AG04449 (cell line): ENCODE measurements at regions of chr15 and their contacts with region 1.

Region 1: DNA sequence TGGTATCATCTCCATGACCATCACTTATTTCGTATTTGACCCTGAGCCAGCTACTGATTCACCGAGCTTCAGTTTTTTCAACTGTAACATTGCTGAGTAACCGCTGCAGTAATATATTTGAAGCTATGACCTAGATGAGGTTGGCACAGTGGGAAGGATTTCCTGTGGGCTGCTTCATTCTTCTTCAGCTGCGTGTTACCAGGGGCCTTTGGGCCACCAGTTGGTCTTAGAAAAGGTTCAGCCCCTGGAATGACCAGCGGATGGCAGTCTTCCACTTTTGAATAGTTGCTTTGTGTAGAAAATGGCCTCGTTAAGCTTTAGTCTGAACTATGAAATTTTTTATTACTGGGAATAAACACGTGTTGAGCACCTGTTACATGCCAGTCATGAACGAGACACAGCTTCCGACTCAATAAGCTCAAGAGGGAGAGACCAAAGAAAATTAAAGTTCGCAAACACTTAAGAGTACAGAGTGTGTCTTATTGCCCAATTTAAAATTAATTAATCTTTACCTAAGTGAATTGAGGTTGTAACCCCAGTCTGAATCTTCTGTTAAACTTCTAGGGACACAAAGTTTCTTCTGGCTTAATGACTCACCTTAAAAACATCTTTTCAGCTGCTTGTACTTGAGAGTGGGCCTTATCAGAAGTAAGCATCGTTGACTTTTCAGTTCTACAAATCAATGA is 57.6 kb upstream of the NR2E3 start:
- DNase-seq: peak; percentile 92
- H3K4me3 ChIP-seq: no peak overlapping the region
- CTCF ChIP-seq: peak; percentile 62

Region 2: DNA sequence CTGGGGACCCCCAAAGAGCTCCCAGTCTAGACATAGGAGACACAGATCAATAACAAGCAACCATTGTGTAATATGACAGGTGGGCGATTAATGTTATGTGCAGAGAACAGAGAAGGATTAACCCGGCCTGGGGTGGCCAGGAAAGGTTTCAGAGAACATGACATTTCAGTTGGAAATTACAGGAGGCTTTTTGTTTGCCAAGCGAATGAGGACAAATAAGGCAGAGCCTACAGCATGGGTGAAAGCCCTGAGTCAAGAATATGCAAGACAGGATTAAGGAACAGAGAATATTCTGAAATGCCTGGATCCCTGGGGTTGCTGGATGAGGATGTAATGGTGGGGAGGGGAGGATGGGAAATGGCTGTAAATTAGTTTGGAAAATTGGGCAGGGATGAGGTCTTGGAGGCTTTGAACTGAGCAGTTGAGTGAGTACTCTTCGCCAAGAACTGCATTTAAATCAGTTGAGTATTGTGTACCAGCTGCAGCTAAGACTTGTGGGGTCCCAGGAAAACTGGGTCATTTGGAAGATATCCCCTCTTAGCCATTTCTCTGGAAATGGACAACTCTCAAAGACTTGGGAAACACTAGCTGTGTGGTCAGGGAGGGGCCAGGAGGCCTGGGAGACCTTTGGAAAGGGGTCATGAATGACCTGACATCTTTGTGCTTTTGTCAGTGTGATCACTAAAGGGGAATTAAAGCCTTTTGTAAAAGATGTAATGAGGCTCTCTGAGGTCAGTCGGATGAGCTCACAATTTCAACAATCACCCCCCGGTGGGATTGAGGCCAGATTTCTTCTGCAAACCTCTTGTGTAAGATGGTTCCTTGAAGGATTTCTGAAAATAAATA is 141.0 kb before region 1 on chr15:
- CTCF ChIA-PET with region 1: no interaction called
- POLR2A ChIA-PET with region 1: no interaction called
- DNase-seq: no peak
- H3K4me3 ChIP-seq: no peak overlapping the region
- CTCF ChIP-seq: no peak

Region 3: GRCh38 chr15:71730277-71731144 is 22.2 kb before region 1 on chr15:
- CTCF ChIA-PET with region 1: interaction called, 10 read pairs
- POLR2A ChIA-PET with region 1: no interaction called
- DNase-seq: no peak
- H3K4me3 ChIP-seq: no peak overlapping the region
- CTCF ChIP-seq: peak; percentile 83

Region 4: GRCh38 chr15:71780115-71780976 is 27.6 kb after region 1 on chr15:
- CTCF ChIA-PET with region 1: interaction called, 59 read pairs
- POLR2A ChIA-PET with region 1: no interaction called
- DNase-seq: no peak
- H3K4me3 ChIP-seq: no peak overlapping the region
- CTCF ChIP-seq: peak; percentile 61

Region 5: DNA sequence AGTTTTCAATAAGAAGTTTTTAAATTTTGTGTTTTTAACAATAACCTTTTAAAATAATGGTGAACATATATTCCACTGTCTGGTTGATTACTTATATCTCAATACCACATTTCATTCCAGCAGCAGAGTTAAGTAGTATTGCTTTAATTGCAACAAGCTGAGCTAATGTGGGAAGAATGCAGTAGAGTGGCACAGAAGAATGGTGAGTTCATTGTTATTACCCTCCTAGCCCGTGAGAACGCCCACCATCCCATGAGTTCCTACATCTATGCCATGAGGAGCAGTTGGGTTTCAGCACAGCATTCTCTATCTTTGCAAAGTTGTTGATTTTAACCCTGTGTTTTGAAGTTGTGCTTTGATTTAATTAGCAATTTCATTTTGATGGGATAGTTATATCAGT is 39.8 kb after region 1 on chr15:
- CTCF ChIA-PET with region 1: interaction called, 171 read pairs
- POLR2A ChIA-PET with region 1: no interaction called
- DNase-seq: peak; percentile 52
- H3K4me3 ChIP-seq: no peak overlapping the region
- CTCF ChIP-seq: no peak

Region 6: GRCh38 chr15:71806452-71806931 is 53.7 kb after region 1 on chr15:
- CTCF ChIA-PET with region 1: interaction called, 171 read pairs
- POLR2A ChIA-PET with region 1: no interaction called
- DNase-seq: no peak
- H3K4me3 ChIP-seq: no peak overlapping the region
- CTCF ChIP-seq: no peak

Region 7: DNA sequence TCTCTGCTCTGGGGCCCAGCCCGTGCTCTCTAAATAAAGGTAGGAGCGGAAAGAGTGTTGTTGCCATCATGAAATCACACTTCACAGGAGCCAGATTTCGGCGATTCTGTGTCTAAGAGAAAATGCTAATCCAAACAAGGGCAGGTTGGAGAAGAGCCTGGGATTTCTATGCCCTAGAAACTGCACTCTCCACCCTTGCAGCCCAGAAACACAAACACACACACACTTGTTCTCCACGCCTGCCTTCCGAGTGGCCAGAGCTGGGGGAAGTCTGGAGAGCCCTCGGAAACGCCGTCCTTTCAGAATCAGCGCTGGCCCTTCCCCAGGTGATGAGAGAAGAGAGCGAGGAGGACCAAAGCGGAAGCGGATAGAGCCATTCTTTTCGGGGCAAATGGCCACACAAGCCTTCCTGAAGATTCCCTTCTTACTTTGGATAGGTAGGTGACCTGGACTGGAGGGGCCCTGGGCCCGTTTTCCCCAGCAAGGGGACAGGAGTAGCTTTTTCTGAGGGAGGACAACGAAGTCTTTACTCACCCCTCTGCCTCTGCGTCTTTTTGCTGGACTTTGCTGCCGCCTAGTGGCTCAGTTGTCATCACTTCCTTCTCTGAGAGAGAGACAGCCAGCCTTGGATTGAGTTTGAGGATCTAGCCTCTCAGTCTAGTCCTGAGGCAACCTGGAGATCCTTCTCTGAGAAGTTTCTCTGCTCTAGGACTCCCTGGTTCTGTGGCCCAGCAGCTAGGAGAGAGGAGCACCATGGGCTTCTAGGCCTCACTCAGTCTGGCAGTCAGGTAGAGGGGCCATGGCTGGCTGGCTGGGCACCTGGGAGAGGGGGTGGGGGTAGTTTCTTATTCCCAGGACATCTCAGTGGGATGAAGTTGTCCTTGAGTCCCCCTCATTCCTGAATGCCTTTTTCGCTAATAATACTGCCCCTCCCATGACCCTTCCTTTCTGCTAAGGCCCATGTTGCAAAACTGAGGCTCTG is 403.2 kb after region 1 on chr15:
- CTCF ChIA-PET with region 1: interaction called, 66 read pairs
- POLR2A ChIA-PET with region 1: no interaction called
- DNase-seq: peak; percentile 29
- H3K4me3 ChIP-seq: peak overlapping the region; percentile 64
- CTCF ChIP-seq: peak; percentile 86